IMR-90 (cell line): ENCODE measurements at regions of chr13 and their contacts with region 1.

Region 1: GRCh38 chr13:21060987-21061763 is at the start of gene LATS2:
- DNase-seq: peak; percentile 94
- ATAC-seq: peak; percentile 87
- H3K4me3 ChIP-seq: peak within 1 kb of the TSS; percentile 74
- H3K27ac ChIP-seq: peak within 1 kb of the TSS; percentile 95
- H3K4me1 ChIP-seq: peaks cover 14% of the 10 kb centered on the region
- H3K27me3 ChIP-seq: no peaks in the 10 kb centered on the region
- CTCF ChIP-seq: peak; percentile 20; the same call in 1 of the 2 replicates
- POLR2A ChIP-seq: peak; percentile 93
- RAD21 ChIP-seq: peak; percentile 35
- total RNA-seq, gene LATS2: 12.7 and 16.4 TPM in 2 replicates

Region 2: GRCh38 chr13:20867408-20867807 is 193.8 kb before region 1 on chr13:
- CTCF ChIA-PET with region 1: no interaction called
- POLR2A ChIA-PET with region 1: no interaction called
- dilution Hi-C with region 1: no loop called
- in situ Hi-C with region 1: no loop called
- intact Hi-C with region 1: no loop called
- DNase-seq: no peak
- ATAC-seq: no peak
- H3K4me3 ChIP-seq: no peak overlapping the region
- H3K27ac ChIP-seq: no peak overlapping the region
- H3K4me1 ChIP-seq: no peaks in the 10 kb centered on the region
- H3K27me3 ChIP-seq: no peaks in the 10 kb centered on the region
- CTCF ChIP-seq: no peak
- POLR2A ChIP-seq: no peak
- RAD21 ChIP-seq: no peak

Region 3: GRCh38 chr13:21075011-21075898 is 14.1 kb after region 1 on chr13:
- CTCF ChIA-PET with region 1: no interaction called
- POLR2A ChIA-PET with region 1: no interaction called
- dilution Hi-C with region 1: no loop called
- in situ Hi-C with region 1: no loop called
- intact Hi-C with region 1: no loop called
- DNase-seq: no peak
- ATAC-seq: peak; percentile 6; the same call in 1 of the 2 replicates
- H3K4me3 ChIP-seq: no peak overlapping the region
- H3K27ac ChIP-seq: no peak overlapping the region
- H3K4me1 ChIP-seq: peaks cover 21% of the 10 kb centered on the region
- H3K27me3 ChIP-seq: no peaks in the 10 kb centered on the region
- CTCF ChIP-seq: no peak
- POLR2A ChIP-seq: no peak
- RAD21 ChIP-seq: no peak

Region 4: DNA sequence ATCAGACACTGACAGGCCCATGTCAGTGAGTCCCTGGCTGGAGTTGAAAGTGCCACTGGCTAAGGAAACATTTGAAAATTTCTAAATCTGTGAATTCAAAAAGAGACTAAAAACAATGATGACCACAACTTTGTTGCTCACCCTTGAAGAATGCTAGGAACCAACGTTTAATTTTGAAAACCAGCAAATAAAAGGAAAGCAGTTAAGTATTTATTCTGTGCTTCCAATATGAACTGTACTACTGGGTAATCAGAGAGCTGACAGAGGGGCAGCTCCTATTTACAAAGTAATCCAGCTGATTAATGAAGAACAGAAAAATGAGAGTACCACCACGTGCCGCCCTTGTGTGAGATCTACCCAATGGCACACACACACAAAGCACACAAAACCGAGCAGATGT is 44.9 kb after region 1 on chr13:
- CTCF ChIA-PET with region 1: interaction called, 4 read pairs
- POLR2A ChIA-PET with region 1: no interaction called
- dilution Hi-C with region 1: no loop called
- in situ Hi-C with region 1: no loop called
- intact Hi-C with region 1: loop called (anchors 5 kb)
- DNase-seq: peak; percentile 74
- ATAC-seq: peak; percentile 92
- H3K4me3 ChIP-seq: no peak overlapping the region
- H3K27ac ChIP-seq: peak overlapping the region; percentile 90
- H3K4me1 ChIP-seq: peaks cover 5% of the 10 kb centered on the region
- H3K27me3 ChIP-seq: no peaks in the 10 kb centered on the region
- CTCF ChIP-seq: no peak
- POLR2A ChIP-seq: no peak
- RAD21 ChIP-seq: no peak

Region 5: DNA sequence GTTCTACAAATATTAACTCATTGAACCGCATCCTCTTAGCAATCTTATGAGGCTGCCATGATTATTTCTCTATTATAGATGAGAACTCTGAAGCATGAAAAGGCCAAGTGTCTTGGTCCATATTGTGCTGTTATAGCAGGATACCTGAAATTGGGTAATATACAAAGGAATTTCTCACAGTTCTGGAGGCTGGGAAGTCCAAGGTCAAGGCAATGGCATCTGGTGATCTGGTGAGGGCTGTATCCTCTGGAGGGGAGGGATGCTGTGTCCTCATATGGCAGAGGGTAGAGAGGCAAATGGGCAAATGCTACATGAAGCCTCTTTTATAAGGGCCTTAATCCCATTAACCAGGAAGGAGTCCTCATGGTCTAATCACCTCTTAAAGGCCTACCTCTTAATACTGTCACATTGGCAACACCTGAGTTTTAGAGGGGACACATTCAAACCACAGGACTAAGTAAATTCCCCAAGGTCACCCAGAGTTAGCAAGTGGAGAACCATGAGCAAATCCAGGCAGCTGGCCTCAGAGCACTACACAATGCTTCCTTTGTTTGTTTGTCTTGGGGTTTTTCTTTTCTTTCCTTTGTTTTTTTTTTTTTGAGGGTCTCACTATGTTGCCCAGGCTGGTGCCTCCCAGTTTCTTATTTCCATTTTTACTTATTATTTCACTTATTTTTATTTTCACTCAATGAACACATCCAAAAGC is 56.1 kb after region 1 on chr13:
- CTCF ChIA-PET with region 1: no interaction called
- POLR2A ChIA-PET with region 1: no interaction called
- dilution Hi-C with region 1: no loop called
- in situ Hi-C with region 1: no loop called
- intact Hi-C with region 1: no loop called
- DNase-seq: no peak
- ATAC-seq: no peak
- H3K4me3 ChIP-seq: no peak overlapping the region
- H3K27ac ChIP-seq: no peak overlapping the region
- H3K4me1 ChIP-seq: no peaks in the 10 kb centered on the region
- H3K27me3 ChIP-seq: no peaks in the 10 kb centered on the region
- CTCF ChIP-seq: no peak
- POLR2A ChIP-seq: no peak
- RAD21 ChIP-seq: no peak